Left ventricle myocardium superior (tissue), 1 donor: ENCODE measurements at regions of chr20 and their contacts with region 1.

Region 1: GRCh38 chr20:51318058-51318895 is 224.2 kb downstream of the NFATC2 start:
- DNase-seq: peak; percentile 47
- ATAC-seq: no peak

Region 2: DNA sequence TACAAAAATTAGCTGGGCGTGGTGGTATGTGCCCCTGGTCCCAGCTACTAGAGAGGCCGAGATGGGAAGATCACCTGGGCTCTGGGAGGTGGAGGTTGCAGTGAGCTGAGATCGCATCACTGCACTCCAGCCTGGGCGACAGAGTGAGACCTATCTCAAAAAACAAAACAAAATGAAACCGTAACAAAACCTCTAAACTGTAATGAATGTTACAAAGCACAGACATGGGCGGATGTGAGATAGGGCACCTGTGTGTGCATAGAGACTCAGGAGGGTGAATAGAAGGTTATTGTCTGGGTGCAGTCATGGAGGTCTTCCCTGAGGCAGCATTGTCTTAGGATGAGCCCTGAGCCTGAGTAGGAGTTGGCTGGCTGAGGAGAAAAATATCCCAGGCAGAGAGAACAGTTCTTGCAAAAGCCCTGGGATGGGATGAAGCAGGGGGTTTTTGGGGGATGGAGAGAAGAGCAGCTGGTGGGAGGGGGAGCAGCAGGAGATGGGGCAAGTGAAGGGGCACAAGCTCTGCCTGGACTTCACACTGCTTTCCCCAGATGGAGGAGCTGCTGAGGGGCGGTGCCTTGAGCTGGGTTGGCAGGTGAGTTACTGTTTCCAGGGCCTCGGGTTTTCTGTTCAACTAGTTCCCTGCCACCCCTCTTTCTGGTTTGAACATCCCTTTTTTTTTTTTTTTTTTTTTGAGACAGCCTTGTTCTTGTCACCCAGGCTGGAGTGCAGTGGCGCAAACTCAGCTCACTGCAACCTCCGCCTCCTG is 518.2 kb before region 1 on chr20:
- intact Hi-C with region 1: loop called (anchors 10 kb)
- DNase-seq: peak; percentile 19
- ATAC-seq: no peak

Region 3: DNA sequence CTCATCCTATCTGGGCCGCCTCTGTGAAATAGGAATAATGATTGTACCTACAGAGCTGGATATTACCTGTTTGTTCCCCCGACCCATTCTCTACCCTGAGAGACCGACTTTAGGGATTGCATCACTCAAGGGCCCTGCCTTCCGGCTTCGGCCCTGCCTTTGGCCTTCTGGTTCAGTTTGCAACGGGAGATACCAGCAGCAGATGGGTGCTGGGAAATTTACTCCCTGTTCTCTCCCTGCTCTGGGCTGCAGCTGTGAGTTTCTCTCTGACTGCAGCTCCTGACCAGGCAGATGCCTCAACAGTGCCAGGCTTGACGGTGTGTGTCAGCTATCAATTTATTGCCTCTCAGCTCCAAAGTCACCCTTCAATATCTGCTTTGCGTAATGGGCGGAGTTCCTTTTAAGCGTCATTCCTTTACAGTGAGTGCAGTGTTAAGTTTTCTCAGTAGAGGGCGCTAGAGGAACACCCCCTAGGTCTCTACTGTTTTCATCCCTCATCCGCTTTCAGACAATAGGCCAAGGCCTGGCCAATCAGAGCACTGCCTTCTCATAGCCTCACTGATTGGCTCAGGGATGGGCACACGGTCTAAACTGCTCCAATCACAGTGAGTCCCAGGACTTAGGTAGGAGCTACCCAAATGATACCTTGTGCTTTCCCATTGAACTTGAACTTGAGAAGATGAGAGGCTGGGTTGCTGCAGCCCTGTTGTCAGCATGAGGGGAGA is 325.4 kb before region 1 on chr20:
- intact Hi-C with region 1: loop called (anchors 5 kb)
- DNase-seq: no peak
- ATAC-seq: peak; percentile 36